Gastrocnemius medialis (tissue), 4 donors: ENCODE measurements at regions of chr5 and their contacts with region 1.

Region 1: GRCh38 chr5:10283927-10284635 is 23.6 kb downstream of the CMBL start:
- DNase-seq: peak; percentile 68 to 79
- ATAC-seq: peak in 1 of 2 donors; percentile 28
- H3K4me3 ChIP-seq: no peak overlapping the region
- H3K27ac ChIP-seq: peak overlapping the region in 3 of 4 donors; percentile 91 to 100 (median 96)
- H3K4me1 ChIP-seq: peaks cover 31 to 32% of the 10 kb centered on the region in 2 donors
- H3K27me3 ChIP-seq: no peaks in the 10 kb centered on the region
- CTCF ChIP-seq: peak; percentile 89 to 98 (median 91)
- POLR2A ChIP-seq: no peak

Region 2: GRCh38 chr5:10301842-10302610 is 17.9 kb after region 1 on chr5:
- in situ Hi-C with region 1: no loop called
- intact Hi-C with region 1: loop called (anchors 1 kb)
- DNase-seq: peak; percentile 91 to 97
- ATAC-seq: peak; percentile 76 to 83
- H3K4me3 ChIP-seq: peak overlapping the region; percentile 39 to 62 (median 52)
- H3K27ac ChIP-seq: peak overlapping the region; percentile 91 to 98 (median 94)
- H3K4me1 ChIP-seq: peaks cover 53 to 73% of the 10 kb centered on the region in 2 donors
- H3K27me3 ChIP-seq: no peaks in the 10 kb centered on the region
- CTCF ChIP-seq: no peak
- POLR2A ChIP-seq: peak; percentile 70

Region 3: DNA sequence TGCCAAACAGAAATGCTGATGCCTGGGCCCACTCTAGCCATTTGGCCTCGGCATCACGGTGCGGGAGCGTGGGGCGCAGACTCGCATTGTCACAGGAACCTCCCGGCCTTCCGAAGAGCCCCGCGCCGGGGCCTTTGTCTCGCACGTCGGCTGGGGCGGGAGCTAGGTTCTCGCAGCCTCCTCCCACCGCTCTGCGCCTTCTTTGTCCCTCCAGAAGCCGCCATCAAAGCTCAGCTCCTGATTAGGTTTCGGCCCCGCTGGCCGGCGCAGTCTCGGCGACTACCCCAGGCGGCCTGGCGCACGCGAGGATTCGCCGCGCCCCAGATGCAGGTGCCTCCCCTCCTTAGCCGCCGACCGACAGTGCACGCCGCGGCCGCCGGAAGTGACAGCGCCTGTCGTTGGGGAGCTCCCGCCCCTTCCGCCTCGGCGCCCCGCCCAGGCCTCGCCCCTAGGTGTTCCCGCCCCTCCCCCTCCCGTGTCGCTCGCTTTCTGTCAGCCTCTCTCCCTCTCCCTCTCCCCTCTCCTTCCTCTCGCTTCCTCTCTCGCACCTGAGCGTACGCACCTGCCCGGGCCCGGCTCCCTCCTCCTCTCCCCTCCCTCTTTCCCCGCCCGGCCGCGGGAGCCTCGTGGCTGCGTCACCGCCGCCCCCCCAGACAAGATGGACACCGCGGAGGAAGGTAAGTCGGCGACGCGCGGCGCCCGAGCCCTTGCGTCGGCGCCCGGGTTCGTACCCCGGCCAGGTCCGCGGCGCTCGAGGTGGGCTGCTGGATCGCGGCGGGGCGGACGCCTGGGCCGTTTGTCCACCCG is 69.4 kb after region 1 on chr5 and contains the start of gene MARCHF6:
- in situ Hi-C with region 1: no loop called
- intact Hi-C with region 1: loop called (anchors 1 kb)
- DNase-seq: peak; percentile 93 to 94
- ATAC-seq: peak; percentile 85 to 88
- H3K4me3 ChIP-seq: peak within 1 kb of the TSS; percentile 79 to 99 (median 83)
- H3K27ac ChIP-seq: peak within 1 kb of the TSS; percentile 97 to 100 (median 98)
- H3K4me1 ChIP-seq: peaks cover 37 to 43% of the 10 kb centered on the region in 2 donors
- H3K27me3 ChIP-seq: no peaks in the 10 kb centered on the region
- CTCF ChIP-seq: peak in 1 of 5 experiments; percentile 8
- POLR2A ChIP-seq: peak; percentile 97
- total RNA-seq, gene MARCHF6: 139 to 173 (median 146) TPM

Region 4: GRCh38 chr5:10401498-10401897 is 117.4 kb after region 1 on chr5:
- in situ Hi-C with region 1: loop called in 2 of 4 experiments (anchors 10 to 25 kb)
- intact Hi-C with region 1: no loop called
- DNase-seq: no peak
- ATAC-seq: no peak
- H3K4me3 ChIP-seq: no peak overlapping the region
- H3K27ac ChIP-seq: peak overlapping the region; percentile 79 to 86 (median 82)
- H3K4me1 ChIP-seq: peaks cover 23 to 26% of the 10 kb centered on the region in 2 donors
- H3K27me3 ChIP-seq: no peaks in the 10 kb centered on the region
- CTCF ChIP-seq: no peak
- POLR2A ChIP-seq: no peak

Region 5: GRCh38 chr5:10441083-10441991 is 157.3 kb after region 1 on chr5 and contains the start of gene ROPN1L:
- in situ Hi-C with region 1: no loop called
- intact Hi-C with region 1: loop called (anchors 5 kb)
- DNase-seq: peak; percentile 72 to 76
- ATAC-seq: peak; percentile 84 to 89
- H3K4me3 ChIP-seq: peak within 1 kb of the TSS; percentile 65 to 89 (median 70)
- H3K27ac ChIP-seq: peak within 1 kb of the TSS; percentile 76 to 87 (median 79)
- H3K4me1 ChIP-seq: peaks cover 26 to 29% of the 10 kb centered on the region in 2 donors
- H3K27me3 ChIP-seq: no peaks in the 10 kb centered on the region
- CTCF ChIP-seq: no peak
- POLR2A ChIP-seq: peak; percentile 55 to 73
- total RNA-seq, gene ROPN1L: 0.46 TPM in 1 of 4 donors, not detected in the others

Region 6: GRCh38 chr5:10627160-10627701 is 343.1 kb after region 1 on chr5:
- in situ Hi-C with region 1: loop called in 3 of 4 experiments (anchors 25 kb)
- intact Hi-C with region 1: loop called (anchors 1 kb)
- DNase-seq: no peak
- ATAC-seq: peak; percentile 19 to 34
- H3K4me3 ChIP-seq: peak overlapping the region; percentile 29 to 46 (median 42)
- H3K27ac ChIP-seq: peak overlapping the region; percentile 44 to 64 (median 52)
- H3K4me1 ChIP-seq: peaks cover 14 to 18% of the 10 kb centered on the region in 2 donors
- H3K27me3 ChIP-seq: no peaks in the 10 kb centered on the region
- CTCF ChIP-seq: no peak
- POLR2A ChIP-seq: no peak